ENCODE measurements at regions of chr13 and their contacts with region 1.

Region 1: DNA sequence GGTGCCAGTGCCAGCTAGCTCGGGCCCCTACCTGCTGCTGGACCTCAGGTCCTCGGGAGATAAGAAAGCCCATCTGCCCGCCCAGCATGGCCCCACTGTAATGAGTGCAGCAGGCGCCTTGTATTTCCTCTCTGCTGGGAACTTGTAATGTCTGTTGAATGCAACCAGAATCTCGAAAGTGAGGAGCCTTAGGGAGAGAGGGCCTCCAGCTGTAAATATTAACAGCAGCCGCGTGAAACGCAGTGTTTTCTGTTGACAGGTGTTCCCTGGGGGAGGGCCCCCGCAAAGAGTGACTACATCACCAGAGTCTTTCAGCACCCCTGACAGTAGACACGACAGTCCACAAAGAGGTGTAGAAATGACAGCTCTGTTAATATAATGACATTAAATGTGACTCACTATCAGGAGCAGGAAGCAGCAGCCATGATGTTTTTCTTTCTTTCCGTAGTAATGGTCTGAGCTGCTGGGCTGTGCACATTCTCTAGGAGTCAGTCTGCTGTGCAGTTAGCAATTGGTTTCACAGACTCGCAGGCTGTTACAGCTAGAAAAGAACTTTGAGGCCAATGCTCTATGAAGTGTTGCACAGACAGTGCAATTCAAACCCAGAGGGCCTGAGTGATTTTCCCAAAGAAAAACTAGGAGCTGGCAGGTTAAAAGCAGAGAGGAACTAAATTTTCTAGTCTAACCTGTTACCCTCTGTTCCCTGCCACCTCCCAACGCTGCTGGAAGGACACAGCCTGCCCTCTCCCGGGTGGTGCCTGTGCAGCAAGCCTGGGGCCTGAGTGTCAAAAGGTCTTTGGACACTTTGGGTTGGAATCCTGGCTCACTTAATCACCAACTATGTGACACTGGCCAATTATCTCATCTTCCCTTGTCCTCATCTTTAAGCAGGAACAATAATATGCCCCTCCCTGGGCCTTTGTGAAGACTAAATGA is 58.6 kb upstream of the WASF3 start:
- DNase-seq: no peak
- ATAC-seq: peak in 3 of 4 donors; percentile 11 to 26 (median 18)
- H3K4me3 ChIP-seq: no peak overlapping the region
- H3K27ac ChIP-seq: no peak overlapping the region
- H3K4me1 ChIP-seq: no peaks in the 10 kb centered on the region
- H3K27me3 ChIP-seq: no peaks in the 10 kb centered on the region
- CTCF ChIP-seq: no peak

Region 2: GRCh38 chr13:26186118-26186870 is 312.6 kb before region 1 on chr13:
- intact Hi-C with region 1: loop called in 2 of 3 experiments (anchors 5 to 10 kb)
- DNase-seq: peak; percentile 90 to 96 (median 91)
- ATAC-seq: peak; percentile 96 to 98 (median 97)
- H3K4me3 ChIP-seq: peak overlapping the region; percentile 42 to 75 (median 55)
- H3K27ac ChIP-seq: peak overlapping the region; percentile 64 to 89 (median 80)
- H3K4me1 ChIP-seq: no peaks in the 10 kb centered on the region
- H3K27me3 ChIP-seq: no peaks in the 10 kb centered on the region
- CTCF ChIP-seq: peak in 3 of 4 donors; percentile 17 to 32 (median 25)

Region 3: DNA sequence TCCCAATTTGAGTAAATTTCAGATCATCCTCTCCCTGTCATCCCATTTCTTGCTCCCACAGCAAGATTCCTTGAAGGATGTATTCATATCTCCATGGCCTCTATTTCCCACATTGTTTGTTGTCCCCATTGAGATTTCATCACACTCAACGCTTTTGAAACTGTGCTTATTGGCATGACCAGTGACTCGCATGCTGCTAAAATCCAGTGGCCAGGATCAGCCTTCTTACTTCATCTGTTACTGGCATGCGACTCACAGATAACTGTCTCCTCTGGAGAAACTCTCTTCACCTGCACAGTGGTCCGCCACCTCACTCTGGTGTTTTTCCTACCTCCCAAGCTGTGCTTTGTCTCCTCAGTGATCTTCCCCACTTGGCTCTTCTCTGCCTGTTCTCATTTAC is 154.4 kb after region 1 on chr13:
- intact Hi-C with region 1: no loop called
- DNase-seq: no peak
- ATAC-seq: no peak
- H3K4me3 ChIP-seq: no peak overlapping the region
- H3K27ac ChIP-seq: no peak overlapping the region
- H3K4me1 ChIP-seq: no peaks in the 10 kb centered on the region
- H3K27me3 ChIP-seq: no peaks in the 10 kb centered on the region
- CTCF ChIP-seq: no peak